H1 (cell line): ENCODE measurements at regions of chr7 and their contacts with region 1.

Region 1: GRCh38 chr7:94289071-94289470 is 105.6 kb upstream of the COL1A2 start:
- DNase-seq: peak; percentile 57 to 59
- H3K4me3 ChIP-seq: no peak overlapping the region
- H3K27ac ChIP-seq: no peak overlapping the region
- H3K4me1 ChIP-seq: no peaks in the 10 kb centered on the region
- H3K27me3 ChIP-seq: no peaks in the 10 kb centered on the region
- CTCF ChIP-seq: peak; percentile 70 to 97 (median 97)
- EP300 ChIP-seq: no peak
- POLR2A ChIP-seq: no peak
- RAD21 ChIP-seq: peak; percentile 100

Region 2: DNA sequence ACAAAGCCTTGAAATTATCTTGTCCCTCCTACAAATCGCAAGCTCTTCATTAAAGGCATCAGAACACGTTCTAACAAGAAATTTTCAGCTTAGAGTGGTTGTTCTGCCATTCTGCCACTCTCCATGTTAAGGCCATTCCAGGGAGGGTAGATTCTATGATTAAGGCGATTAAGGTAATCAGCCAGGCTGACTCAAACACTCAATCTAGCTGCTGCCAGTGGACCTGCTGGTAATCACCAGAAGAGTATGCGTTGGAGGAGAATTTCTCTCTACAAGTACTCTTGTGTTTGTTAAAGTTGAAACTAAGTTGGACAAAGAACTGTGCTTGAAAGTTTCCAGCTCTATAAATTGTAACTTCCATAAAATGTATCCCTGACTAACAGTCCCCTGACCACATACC is 43.6 kb before region 1 on chr7:
- CTCF ChIA-PET with region 1: interaction called, 10 read pairs
- POLR2A ChIA-PET with region 1: no interaction called
- DNase-seq: no peak
- H3K4me3 ChIP-seq: no peak overlapping the region
- H3K27ac ChIP-seq: no peak overlapping the region
- H3K4me1 ChIP-seq: no peaks in the 10 kb centered on the region
- H3K27me3 ChIP-seq: peaks cover 0 to 1% (median 0%) of the 10 kb centered on the region in 4 experiments; a peak in 2 of 7 replicates
- CTCF ChIP-seq: no peak
- EP300 ChIP-seq: no peak
- POLR2A ChIP-seq: no peak
- RAD21 ChIP-seq: no peak

Region 3: GRCh38 chr7:94301024-94301586 is 12.0 kb after region 1 on chr7:
- CTCF ChIA-PET with region 1: interaction called, 37 read pairs
- POLR2A ChIA-PET with region 1: interaction called, 3 read pairs
- DNase-seq: peak; percentile 57 to 67
- H3K4me3 ChIP-seq: peak overlapping the region in 1 of 4 experiments; percentile 31; a peak in 2 of 8 replicates
- H3K27ac ChIP-seq: 0 out of 2 replicates have a peak overlapping the region, but pooled peaks have one; percentile 17
- H3K4me1 ChIP-seq: peaks cover 3 to 23% (median 8%) of the 10 kb centered on the region in 4 experiments; a peak in 6 of 7 replicates
- H3K27me3 ChIP-seq: peaks cover 0 to 1% (median 0%) of the 10 kb centered on the region in 4 experiments; a peak in 1 of 7 replicates
- CTCF ChIP-seq: peak; percentile 15 to 46 (median 21); a peak in 3 of 4 replicates
- EP300 ChIP-seq: no peak
- POLR2A ChIP-seq: no peak
- RAD21 ChIP-seq: peak; percentile 39 to 47; a peak in 3 of 4 replicates

Region 4: DNA sequence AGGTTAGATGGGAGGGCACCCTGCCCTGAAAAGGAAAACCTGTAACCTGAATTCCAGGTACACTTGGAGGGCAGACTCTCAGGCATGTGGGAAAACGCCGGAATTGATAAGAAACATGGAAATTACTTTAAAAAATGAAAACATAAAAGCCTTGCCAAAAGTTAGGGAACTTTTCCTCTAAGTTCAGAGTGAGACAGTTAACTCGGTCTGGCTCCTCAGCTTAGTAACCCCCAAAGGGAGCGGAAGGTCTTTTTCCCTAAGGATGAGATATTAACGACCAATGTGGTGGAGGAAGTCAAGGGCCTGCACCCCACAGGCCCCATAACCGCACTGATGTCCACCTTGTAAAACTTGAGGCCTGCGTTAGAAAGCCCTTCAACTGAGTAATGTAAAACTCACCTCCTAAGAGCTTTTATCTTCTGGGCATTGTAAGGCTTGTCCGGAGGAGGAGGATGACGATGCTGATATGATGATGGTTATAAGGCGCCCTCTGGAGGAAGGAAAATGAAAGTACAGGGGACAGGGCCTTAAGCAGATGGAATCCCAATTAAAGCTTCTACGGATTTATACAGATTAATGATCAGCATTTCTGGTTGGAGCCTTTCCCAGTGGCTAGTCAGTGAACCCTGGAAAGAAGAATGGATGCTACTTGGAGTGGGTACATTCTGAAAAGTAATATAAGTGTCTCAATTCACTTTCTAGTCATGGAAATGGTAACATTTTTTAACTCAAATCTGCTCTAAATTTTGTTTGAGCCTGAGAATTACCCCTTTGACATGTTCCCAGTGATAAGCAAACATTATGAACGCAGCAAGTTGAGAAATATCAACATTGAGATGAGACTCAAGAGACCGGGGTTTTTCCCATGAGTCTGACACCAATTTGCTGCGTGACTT is 106.3 kb after region 1 on chr7:
- CTCF ChIA-PET with region 1: interaction called, 372 read pairs
- POLR2A ChIA-PET with region 1: interaction called, 20 read pairs
- DNase-seq: peak in 1 of 2 experiments; percentile 55
- H3K4me3 ChIP-seq: peak overlapping the region; percentile 47 to 77 (median 68)
- H3K27ac ChIP-seq: peak overlapping the region; percentile 63
- H3K4me1 ChIP-seq: peaks cover 4 to 24% (median 13%) of the 10 kb centered on the region in 4 experiments; a peak in 6 of 7 replicates
- H3K27me3 ChIP-seq: peaks cover 0 to 3% (median 0%) of the 10 kb centered on the region in 4 experiments; a peak in 3 of 7 replicates
- CTCF ChIP-seq: peak in 2 of 3 experiments; percentile 82 to 83; a peak in 3 of 4 replicates
- EP300 ChIP-seq: no peak
- POLR2A ChIP-seq: no peak
- RAD21 ChIP-seq: peak; percentile 94

Region 5: DNA sequence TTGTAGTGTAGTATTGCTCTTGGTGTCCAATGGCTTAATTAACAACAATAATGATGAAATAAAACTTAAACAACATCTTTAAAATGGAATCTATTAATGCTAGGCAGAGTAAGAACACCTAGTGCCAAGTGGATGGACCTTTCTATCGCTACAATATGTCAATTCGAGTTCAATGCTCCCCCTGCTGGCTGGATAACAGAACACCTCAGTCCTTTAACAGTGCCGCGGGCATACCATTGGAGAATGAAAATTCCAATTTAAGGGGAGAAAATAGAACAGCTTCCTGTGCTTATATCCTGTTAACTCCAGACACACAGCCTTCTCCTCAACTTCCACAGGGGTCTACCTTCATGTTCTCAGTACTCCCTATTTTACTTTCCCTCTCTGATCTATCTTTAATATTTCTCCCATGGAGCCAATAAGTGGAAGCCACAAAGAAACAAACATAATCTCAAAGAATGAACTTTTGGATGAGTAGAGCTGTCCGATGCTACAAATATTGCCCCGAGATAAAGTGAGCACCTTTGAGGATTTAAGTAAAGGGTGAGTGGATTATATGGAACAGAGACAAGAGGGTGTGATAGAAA is 147.0 kb after region 1 on chr7:
- CTCF ChIA-PET with region 1: interaction called, 32 read pairs
- POLR2A ChIA-PET with region 1: no interaction called
- DNase-seq: peak; percentile 19 to 66
- H3K4me3 ChIP-seq: no peak overlapping the region
- H3K27ac ChIP-seq: no peak overlapping the region
- H3K4me1 ChIP-seq: no peaks in the 10 kb centered on the region
- H3K27me3 ChIP-seq: no peaks in the 10 kb centered on the region
- CTCF ChIP-seq: peak; percentile 34 to 87 (median 74)
- EP300 ChIP-seq: no peak
- POLR2A ChIP-seq: no peak
- RAD21 ChIP-seq: peak; percentile 72 to 75